CD14-positive monocyte (primary cell): ENCODE measurements at regions of chr21 and their contacts with region 1.

Region 1: GRCh38 chr21:33542640-33543504 is at the start of gene SON:
- DNase-seq: peak; percentile 97 to 99 (median 98)
- H3K4me3 ChIP-seq: peak within 1 kb of the TSS; percentile 79 to 89 (median 88)
- H3K4me3 Mint-ChIP-seq: peak within 1 kb of the TSS; percentile 84 to 97
- H3K27ac ChIP-seq: peak within 1 kb of the TSS; percentile 98 to 100
- H3K27ac Mint-ChIP-seq: peak within 1 kb of the TSS; percentile 99 to 100 (median 100)
- H3K4me1 ChIP-seq: peaks cover 26 to 38% of the 10 kb centered on the region in 2 donors
- H3K4me1 Mint-ChIP-seq: peaks cover 36% of the 10 kb centered on the region
- H3K27me3 ChIP-seq: no peaks in the 10 kb centered on the region
- H3K27me3 Mint-ChIP-seq: no peaks in the 10 kb centered on the region
- CTCF ChIP-seq: no peak
- polyA plus RNA-seq, gene SON: 66.4 to 269 (median 184) TPM

Region 2: DNA sequence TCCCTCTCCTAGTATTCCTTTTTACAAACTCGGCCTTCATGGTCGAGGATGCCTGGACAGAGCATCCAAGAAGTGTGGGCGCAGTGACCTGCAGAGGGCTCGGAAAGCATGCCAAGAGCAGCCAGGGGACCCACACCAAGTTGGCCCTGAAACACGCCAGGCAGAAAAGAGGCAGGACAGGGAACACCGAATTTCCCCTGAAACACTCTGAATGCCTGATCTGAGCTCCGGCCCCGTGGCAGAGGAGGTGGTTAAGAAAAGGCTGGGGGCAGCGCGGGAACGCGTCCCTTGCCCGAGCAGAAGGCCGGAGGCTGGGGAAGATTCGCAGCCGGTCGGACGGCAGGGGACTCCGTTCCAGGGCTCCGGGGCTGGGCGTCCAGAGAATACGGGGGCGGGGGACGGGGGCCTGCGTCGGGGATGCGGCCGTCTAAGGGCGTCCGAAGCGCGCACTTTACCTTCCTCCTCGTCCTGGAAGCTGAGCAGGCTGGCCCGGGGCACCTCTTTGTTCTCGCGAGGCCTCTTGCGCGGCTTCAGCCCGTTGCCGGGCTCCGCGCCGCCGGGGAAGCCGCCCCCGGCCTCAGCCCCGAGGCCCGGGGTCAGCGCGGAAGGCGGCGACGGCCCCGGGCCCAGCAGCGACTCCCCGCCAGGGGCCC is 771.9 kb before region 1 on chr21:
- intact Hi-C with region 1: loop called in 1 of 2 experiments (anchors 5 kb)
- DNase-seq: peak; percentile 51 to 71 (median 53)
- H3K4me3 ChIP-seq: peak overlapping the region; percentile 43 to 88 (median 86)
- H3K4me3 Mint-ChIP-seq: peak overlapping the region; percentile 98 to 100
- H3K27ac ChIP-seq: peak overlapping the region; percentile 89 to 91
- H3K27ac Mint-ChIP-seq: peak overlapping the region; percentile 89 to 98 (median 95)
- H3K4me1 ChIP-seq: peaks cover 24 to 31% of the 10 kb centered on the region in 2 donors
- H3K4me1 Mint-ChIP-seq: peaks cover 44% of the 10 kb centered on the region
- H3K27me3 ChIP-seq: no peaks in the 10 kb centered on the region
- H3K27me3 Mint-ChIP-seq: peaks cover 0 to 7% (median 5%) of the 10 kb centered on the region in 3 donors
- CTCF ChIP-seq: no peak

Region 3: GRCh38 chr21:33479679-33480480 is 63.0 kb before region 1 on chr21 and contains the start of gene TMEM50B:
- intact Hi-C with region 1: loop called (anchors 2 to 5 kb)
- DNase-seq: peak; percentile 96 to 97 (median 96)
- H3K4me3 ChIP-seq: peak within 1 kb of the TSS; percentile 77 to 97 (median 88)
- H3K4me3 Mint-ChIP-seq: peak within 1 kb of the TSS; percentile 90 to 96
- H3K27ac ChIP-seq: peak within 1 kb of the TSS; percentile 77 to 94
- H3K27ac Mint-ChIP-seq: peak within 1 kb of the TSS; percentile 87 to 97 (median 93)
- H3K4me1 ChIP-seq: peaks cover 21 to 33% of the 10 kb centered on the region in 2 donors
- H3K4me1 Mint-ChIP-seq: peaks cover 24% of the 10 kb centered on the region
- H3K27me3 ChIP-seq: no peaks in the 10 kb centered on the region
- H3K27me3 Mint-ChIP-seq: peaks cover 0 to 1% (median 0%) of the 10 kb centered on the region in 3 donors
- CTCF ChIP-seq: peak; percentile 19
- polyA plus RNA-seq, gene TMEM50B: 33.8 to 43.0 (median 38.2) TPM

Region 4: GRCh38 chr21:33588485-33589335 is 45.8 kb after region 1 on chr21 and contains the start of gene DONSON:
- intact Hi-C with region 1: loop called in 1 of 2 experiments (anchors 5 kb)
- DNase-seq: peak; percentile 83 to 87 (median 84)
- H3K4me3 ChIP-seq: peak within 1 kb of the TSS; percentile 78 to 85 (median 81)
- H3K4me3 Mint-ChIP-seq: peak within 1 kb of the TSS; percentile 92 to 98
- H3K27ac ChIP-seq: peak within 1 kb of the TSS; percentile 48 to 74
- H3K27ac Mint-ChIP-seq: peak within 1 kb of the TSS; percentile 83 to 92 (median 91)
- H3K4me1 ChIP-seq: peaks cover 10 to 16% of the 10 kb centered on the region in 2 donors
- H3K4me1 Mint-ChIP-seq: peaks cover 18% of the 10 kb centered on the region
- H3K27me3 ChIP-seq: no peaks in the 10 kb centered on the region
- H3K27me3 Mint-ChIP-seq: peaks cover 0 to 2% (median 0%) of the 10 kb centered on the region in 3 donors
- CTCF ChIP-seq: no peak
- polyA plus RNA-seq, gene DONSON: 0.94 to 8.6 (median 1.5) TPM